Activated CD4-positive, alpha-beta T cell treated with anti-CD3 and anti-CD28 coated beads, Interleukin-2, amount 10 ng/mL, durations not matched to agents 24 days and 14 days (primary cell): ENCODE measurements at regions of chr15 and their contacts with region 1.

Region 1: DNA sequence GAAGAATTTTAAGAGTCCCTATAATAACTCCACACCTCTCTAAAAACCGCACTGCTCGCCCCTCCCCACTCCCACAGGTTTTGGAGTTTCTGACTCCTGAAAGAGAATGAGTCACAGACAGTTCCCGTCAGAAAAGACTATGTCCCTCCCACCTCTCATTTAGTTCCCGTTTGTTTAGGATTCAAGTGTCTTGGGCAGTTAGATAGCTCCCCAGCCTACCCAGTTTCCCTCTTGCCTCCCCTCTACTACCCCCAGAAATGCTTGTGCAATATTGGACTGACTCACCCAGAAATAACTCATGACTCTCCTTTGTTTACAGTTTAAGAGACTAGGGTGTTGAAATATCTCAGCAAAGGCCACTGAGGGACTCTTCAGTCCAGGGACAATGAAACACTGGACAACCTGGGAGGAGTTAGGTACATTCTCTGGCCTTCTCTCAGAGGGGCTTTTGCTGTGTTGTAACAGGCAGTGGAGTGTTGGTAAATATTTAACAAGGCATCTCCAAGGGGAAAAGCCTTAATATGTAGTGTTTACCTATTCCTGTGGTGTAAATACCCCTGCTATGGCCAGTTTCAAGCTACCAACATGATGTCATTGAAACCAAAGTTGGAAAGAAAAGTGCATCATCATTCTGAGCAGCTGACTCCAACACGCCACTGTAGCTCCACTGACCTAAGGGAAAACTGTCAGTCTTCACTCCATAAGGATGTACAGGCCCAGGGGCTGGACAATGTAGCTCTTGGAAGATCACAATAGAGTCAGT is 96.1 kb upstream of the CHD2 start:
- DNase-seq: peak; percentile 88
- H3K4me3 Mint-ChIP-seq: peak overlapping the region; percentile 15
- H3K27ac Mint-ChIP-seq: peak overlapping the region; percentile 87
- H3K4me1 Mint-ChIP-seq: peaks cover 35% of the 10 kb centered on the region
- H3K27me3 Mint-ChIP-seq: no peaks in the 10 kb centered on the region

Region 2: DNA sequence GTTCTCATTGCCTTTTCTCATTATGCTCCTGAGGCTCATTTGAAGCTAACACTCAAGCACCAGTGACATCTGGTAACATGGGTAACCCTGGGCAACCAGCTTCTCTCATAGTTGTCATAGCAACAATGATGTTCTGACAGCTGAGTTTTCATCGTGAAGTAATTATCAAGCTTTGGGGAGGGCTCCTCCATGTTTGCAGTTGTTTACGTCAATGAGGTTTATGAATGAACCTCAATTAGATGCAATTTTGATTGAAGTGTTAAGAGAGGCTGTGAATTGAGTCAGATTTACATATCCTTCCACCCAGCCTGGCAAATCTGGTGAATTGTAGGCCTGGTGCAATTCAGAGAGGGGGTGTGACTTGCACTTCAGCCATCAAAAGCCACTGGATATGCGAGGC is 23.2 kb before region 1 on chr15:
- intact Hi-C with region 1: no loop called
- DNase-seq: no peak
- H3K4me3 Mint-ChIP-seq: no peak overlapping the region
- H3K27ac Mint-ChIP-seq: no peak overlapping the region
- H3K4me1 Mint-ChIP-seq: no peaks in the 10 kb centered on the region
- H3K27me3 Mint-ChIP-seq: no peaks in the 10 kb centered on the region

Region 3: DNA sequence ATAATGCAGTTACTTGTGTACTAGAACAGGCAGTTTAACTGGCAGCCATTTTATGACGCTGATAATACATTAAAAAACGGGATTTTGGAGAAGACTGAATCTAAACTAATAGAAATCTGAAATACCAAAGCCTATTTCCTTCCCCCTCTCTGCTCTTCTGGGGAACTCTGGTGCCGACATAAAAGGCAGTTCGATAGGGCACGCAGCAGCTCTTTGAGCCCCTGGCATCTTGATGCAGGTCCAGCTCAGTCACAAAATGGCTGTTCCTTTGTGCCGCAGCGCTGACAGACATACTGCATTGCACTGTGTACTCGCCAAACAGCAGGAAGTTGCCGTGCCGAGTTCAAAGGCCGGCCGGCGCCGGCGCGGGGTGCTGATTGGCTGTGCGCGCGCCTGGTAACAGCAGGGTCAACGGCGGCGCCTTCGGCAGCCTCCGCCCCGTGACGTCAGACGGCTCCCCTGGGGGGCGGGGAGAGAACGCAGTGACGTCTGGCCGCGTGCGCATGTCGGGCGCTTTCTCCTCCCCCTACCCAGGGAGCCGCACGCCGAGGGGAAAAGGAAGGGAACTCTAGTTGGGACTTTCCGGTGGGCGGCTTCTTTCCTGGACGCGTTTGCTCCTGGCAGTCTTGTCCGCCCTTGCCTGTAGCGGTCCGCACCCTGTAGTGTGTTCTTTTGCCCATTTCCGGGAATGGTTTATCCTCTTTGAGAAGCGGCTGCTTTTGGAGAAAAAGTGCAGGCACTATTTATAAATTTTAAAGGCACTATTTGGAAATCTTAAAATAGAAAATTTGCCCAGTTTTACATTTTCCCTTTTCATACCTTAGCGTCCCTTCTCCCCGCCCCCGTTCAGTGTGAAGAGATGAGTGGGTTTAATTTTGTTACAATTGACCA is 100.2 kb after region 1 on chr15:
- intact Hi-C with region 1: loop called (anchors 1 kb)
- DNase-seq: peak; percentile 100
- H3K4me3 Mint-ChIP-seq: peak overlapping the region; percentile 89
- H3K27ac Mint-ChIP-seq: peak overlapping the region; percentile 100
- H3K4me1 Mint-ChIP-seq: peaks cover 56% of the 10 kb centered on the region
- H3K27me3 Mint-ChIP-seq: no peaks in the 10 kb centered on the region

Region 4: DNA sequence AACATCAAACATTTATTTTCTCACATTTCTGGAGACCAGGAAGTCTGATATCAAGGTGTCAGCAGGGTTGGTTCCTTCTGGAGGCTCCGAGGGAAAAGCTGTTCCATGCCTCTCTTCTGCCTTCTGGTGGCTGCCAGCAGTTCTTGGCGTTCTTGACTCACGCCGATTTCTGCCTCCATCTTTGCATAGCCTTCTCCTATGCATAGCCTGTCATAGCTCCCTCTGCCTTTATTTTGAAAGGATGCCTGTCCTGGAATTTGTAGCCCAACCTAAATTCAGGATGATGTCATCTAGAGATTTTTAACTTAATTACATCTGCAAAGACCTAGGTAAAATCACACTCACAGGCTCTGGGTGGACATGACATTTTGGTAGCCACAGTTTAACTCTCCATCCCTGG is 214.6 kb after region 1 on chr15:
- intact Hi-C with region 1: loop called (anchors 1 kb)
- DNase-seq: no peak
- H3K4me3 Mint-ChIP-seq: peak overlapping the region; percentile 11
- H3K27ac Mint-ChIP-seq: peak overlapping the region; percentile 72
- H3K4me1 Mint-ChIP-seq: peaks cover 64% of the 10 kb centered on the region
- H3K27me3 Mint-ChIP-seq: no peaks in the 10 kb centered on the region